A549 (cell line): ENCODE measurements at regions of chr3 and their contacts with region 1.

Region 1: GRCh38 chr3:65439641-65440284 is 599.0 kb downstream of the MAGI1 start:
- DNase-seq: peak; percentile 7 to 46
- ATAC-seq: peak; percentile 92 to 93
- H3K4me3 ChIP-seq: no peak overlapping the region
- H3K27ac ChIP-seq: no peak overlapping the region
- H3K4me1 ChIP-seq: no peaks in the 10 kb centered on the region
- CTCF ChIP-seq: peak; percentile 35; the same call in 2 of the 3 replicates
- EP300 ChIP-seq: no peak
- POLR2A ChIP-seq: no peak
- RAD21 ChIP-seq: peak; percentile 53 to 63

Region 2: DNA sequence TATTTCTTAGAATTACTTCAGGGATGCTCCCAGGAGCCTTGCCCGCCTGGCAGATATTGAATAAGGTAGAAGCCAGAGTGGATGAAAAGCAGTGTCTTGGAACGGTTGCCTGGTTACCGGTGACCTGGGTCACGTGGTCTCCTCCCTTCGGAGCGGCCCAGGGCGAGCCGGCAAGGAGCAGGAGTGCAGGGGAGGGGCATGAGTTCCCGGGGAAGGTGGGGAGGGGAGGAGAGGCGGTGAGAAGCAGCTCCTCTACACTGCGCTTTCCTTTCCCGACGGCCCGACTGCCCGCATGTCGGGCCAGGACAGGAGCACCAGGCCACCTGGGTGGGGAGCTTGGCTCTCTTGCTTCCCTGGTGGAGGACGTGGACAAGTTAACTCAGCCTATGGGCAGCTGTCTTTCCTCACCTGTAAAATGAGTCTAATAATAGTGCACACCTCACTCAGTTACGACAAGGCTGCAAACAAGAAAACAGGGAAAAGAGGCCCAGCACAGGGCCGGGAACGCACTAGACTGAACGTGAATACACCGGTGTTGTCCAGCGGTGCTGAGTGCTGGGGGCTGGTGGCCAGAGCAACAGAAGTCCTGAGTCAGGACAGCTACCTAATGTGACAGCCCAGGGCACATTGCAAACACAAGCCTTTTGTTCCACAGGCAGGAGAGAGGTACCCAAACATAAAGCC is 950.3 kb before region 1 on chr3:
- CTCF ChIA-PET with region 1: no interaction called
- POLR2A ChIA-PET with region 1: no interaction called
- DNase-seq: no peak
- ATAC-seq: no peak
- H3K4me3 ChIP-seq: no peak overlapping the region
- H3K27ac ChIP-seq: no peak overlapping the region
- H3K4me1 ChIP-seq: no peaks in the 10 kb centered on the region
- CTCF ChIP-seq: no peak
- EP300 ChIP-seq: no peak
- POLR2A ChIP-seq: no peak
- RAD21 ChIP-seq: no peak

Region 3: GRCh38 chr3:65371053-65371452 is 68.7 kb before region 1 on chr3:
- CTCF ChIA-PET with region 1: no interaction called
- POLR2A ChIA-PET with region 1: no interaction called
- DNase-seq: no peak
- ATAC-seq: no peak
- H3K4me3 ChIP-seq: no peak overlapping the region
- H3K27ac ChIP-seq: no peak overlapping the region
- H3K4me1 ChIP-seq: no peaks in the 10 kb centered on the region
- CTCF ChIP-seq: no peak
- EP300 ChIP-seq: no peak
- POLR2A ChIP-seq: no peak
- RAD21 ChIP-seq: no peak

Region 4: DNA sequence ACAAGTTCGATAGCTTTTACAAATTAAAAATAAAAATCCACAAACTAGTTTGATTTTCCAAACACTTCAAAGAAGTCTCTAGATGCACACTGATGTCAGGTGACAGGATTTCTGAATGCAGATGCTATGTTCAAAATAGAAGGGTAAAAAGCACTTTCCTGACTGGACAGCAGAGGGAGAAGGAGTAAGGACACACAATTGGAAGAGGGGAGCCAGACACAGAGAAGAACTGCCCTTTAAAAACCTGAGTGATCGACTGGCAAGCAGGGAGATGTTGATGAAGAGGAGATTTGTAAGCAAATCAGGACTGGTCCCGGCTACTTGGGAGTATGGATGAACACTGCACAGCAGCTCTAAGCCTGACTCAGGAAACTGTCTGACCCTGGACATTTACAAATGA is 13.9 kb before region 1 on chr3:
- CTCF ChIA-PET with region 1: interaction called, 18 read pairs
- POLR2A ChIA-PET with region 1: no interaction called
- DNase-seq: peak in 1 of 2 experiments; percentile 12
- ATAC-seq: peak; percentile 43 to 62; a peak in 2 of 6 replicates
- H3K4me3 ChIP-seq: no peak overlapping the region
- H3K27ac ChIP-seq: no peak overlapping the region
- H3K4me1 ChIP-seq: no peaks in the 10 kb centered on the region
- CTCF ChIP-seq: no peak
- EP300 ChIP-seq: no peak
- POLR2A ChIP-seq: no peak
- RAD21 ChIP-seq: no peak

Region 5: GRCh38 chr3:65732051-65732935 is 292.5 kb after region 1 on chr3:
- CTCF ChIA-PET with region 1: interaction called, 15 read pairs
- POLR2A ChIA-PET with region 1: no interaction called
- DNase-seq: peak; percentile 33 to 43
- ATAC-seq: peak; percentile 89 to 91
- H3K4me3 ChIP-seq: no peak overlapping the region
- H3K27ac ChIP-seq: no peak overlapping the region
- H3K4me1 ChIP-seq: no peaks in the 10 kb centered on the region
- CTCF ChIP-seq: peak; percentile 59
- EP300 ChIP-seq: no peak
- POLR2A ChIP-seq: no peak
- RAD21 ChIP-seq: peak; percentile 59 to 61

Region 6: GRCh38 chr3:65751123-65751700 is 311.4 kb after region 1 on chr3:
- CTCF ChIA-PET with region 1: interaction called, 10 read pairs
- POLR2A ChIA-PET with region 1: no interaction called
- DNase-seq: peak; percentile 10 to 16
- ATAC-seq: peak; percentile 77 to 80
- H3K4me3 ChIP-seq: no peak overlapping the region
- H3K27ac ChIP-seq: no peak overlapping the region
- H3K4me1 ChIP-seq: no peaks in the 10 kb centered on the region
- CTCF ChIP-seq: peak; percentile 51
- EP300 ChIP-seq: no peak
- POLR2A ChIP-seq: no peak
- RAD21 ChIP-seq: peak in 1 of 2 experiments; percentile 34; a peak in 3 of 5 replicates